A673 (cell line): ENCODE measurements at regions of chr5 and their contacts with region 1.

Region 1: GRCh38 chr5:179795863-179796833 is 2.4 kb downstream of the LTC4S start:
- DNase-seq: peak; percentile 72
- H3K4me3 ChIP-seq: peak overlapping the region; percentile 54
- H3K27ac ChIP-seq: peak overlapping the region; percentile 67
- H3K4me1 ChIP-seq: no peaks in the 10 kb centered on the region
- H3K27me3 ChIP-seq: no peaks in the 10 kb centered on the region
- CTCF ChIP-seq: peak; percentile 51

Region 2: DNA sequence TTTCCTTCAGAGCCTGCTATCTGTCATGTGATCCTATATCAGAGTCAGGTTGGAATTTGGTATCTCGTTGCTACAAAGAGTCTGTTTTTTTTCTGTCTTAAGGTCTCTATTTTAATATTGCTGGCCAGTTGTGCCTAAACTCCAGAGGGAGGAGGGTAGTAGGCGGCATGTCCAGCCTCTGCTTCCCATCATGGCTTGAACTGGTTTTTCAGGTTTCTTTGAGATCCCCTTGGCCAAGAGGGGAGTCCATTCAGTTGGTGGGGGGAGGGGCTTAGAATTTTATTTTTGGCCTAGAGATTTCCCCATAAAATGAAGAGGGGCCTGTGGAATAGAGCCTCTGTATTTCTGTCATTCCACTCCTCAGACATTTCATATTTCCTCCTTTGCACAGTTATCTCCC is 751.4 kb before region 1 on chr5:
- CTCF ChIA-PET with region 1: no interaction called
- POLR2A ChIA-PET with region 1: no interaction called
- intact Hi-C with region 1: no loop called
- DNase-seq: no peak
- H3K4me3 ChIP-seq: no peak overlapping the region
- H3K27ac ChIP-seq: no peak overlapping the region
- H3K4me1 ChIP-seq: no peaks in the 10 kb centered on the region
- H3K27me3 ChIP-seq: no peaks in the 10 kb centered on the region
- CTCF ChIP-seq: no peak

Region 3: DNA sequence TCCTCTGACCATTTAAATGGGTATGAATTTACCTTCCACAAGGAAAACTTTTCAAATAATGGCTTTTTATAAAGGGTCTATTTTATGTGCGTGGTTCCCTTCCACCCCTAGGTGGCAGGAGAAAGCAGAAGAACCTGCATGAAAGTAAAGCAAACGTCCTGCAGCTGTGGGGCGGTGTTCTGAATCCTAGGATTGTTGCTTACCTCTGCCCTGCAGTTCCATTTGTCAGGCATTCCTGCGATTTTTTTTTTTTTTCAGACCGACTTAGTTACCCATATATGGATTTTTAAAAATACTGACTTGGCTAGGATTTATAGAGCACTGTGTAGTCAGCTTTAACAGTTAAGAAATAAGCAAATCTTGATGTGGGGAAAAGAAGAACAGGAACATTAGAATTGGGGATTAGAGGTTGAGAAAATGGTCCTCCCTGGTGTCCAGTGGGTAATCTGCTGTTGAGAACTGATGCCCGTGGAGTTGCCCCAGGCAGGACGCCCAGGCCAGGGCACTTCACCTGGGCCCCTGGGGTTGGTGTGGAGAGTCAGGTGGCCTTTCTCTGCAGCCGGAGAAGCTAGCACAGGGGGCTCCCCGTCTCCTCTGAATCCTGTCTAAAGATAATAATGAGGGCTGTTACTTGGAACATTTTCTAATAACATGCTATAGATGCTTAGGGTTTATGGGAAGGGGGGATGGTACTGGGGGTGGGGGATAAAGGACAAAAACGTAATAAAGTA is 32.8 kb before region 1 on chr5:
- CTCF ChIA-PET with region 1: interaction called, 3 read pairs
- POLR2A ChIA-PET with region 1: no interaction called
- intact Hi-C with region 1: loop called (anchors 2 kb)
- DNase-seq: peak; percentile 75
- H3K4me3 ChIP-seq: no peak overlapping the region
- H3K27ac ChIP-seq: peak overlapping the region; percentile 10
- H3K4me1 ChIP-seq: peaks cover 53% of the 10 kb centered on the region
- H3K27me3 ChIP-seq: no peaks in the 10 kb centered on the region
- CTCF ChIP-seq: peak; percentile 83